ENCODE measurements at regions of chr19 and their contacts with region 1.

Region 1: GRCh38 chr19:38685666-38686529 is 38.4 kb downstream of the ACTN4 start:
- DNase-seq: no peak
- H3K4me3 Mint-ChIP-seq: peak overlapping the region; percentile 64
- H3K27ac Mint-ChIP-seq: peak overlapping the region; percentile 83
- H3K4me1 Mint-ChIP-seq: peaks cover 69% of the 10 kb centered on the region
- H3K27me3 Mint-ChIP-seq: no peaks in the 10 kb centered on the region

Region 2: GRCh38 chr19:38655148-38655824 is 30.6 kb before region 1 on chr19:
- intact Hi-C with region 1: loop called (anchors 1 kb)
- DNase-seq: no peak
- H3K4me3 Mint-ChIP-seq: peak overlapping the region; percentile 43
- H3K27ac Mint-ChIP-seq: peak overlapping the region; percentile 62
- H3K4me1 Mint-ChIP-seq: peaks cover 70% of the 10 kb centered on the region
- H3K27me3 Mint-ChIP-seq: no peaks in the 10 kb centered on the region